Activated CD8-positive, alpha-beta T cell treated with anti-CD3 and anti-CD28 coated beads for 36 hours (primary cell): ENCODE measurements at regions of chr13 and their contacts with region 1.

Region 1: GRCh38 chr13:102913914-102914313 is 68.1 kb downstream of the ERCC5 start:
- DNase-seq: no peak
- ATAC-seq: no peak
- H3K4me3 Mint-ChIP-seq: no peak overlapping the region
- H3K27ac Mint-ChIP-seq: no peak overlapping the region
- H3K4me1 Mint-ChIP-seq: no peaks in the 10 kb centered on the region
- H3K27me3 Mint-ChIP-seq: peaks cover 18% of the 10 kb centered on the region
- CTCF ChIP-seq: no peak

Region 2: GRCh38 chr13:103140001-103140671 is 226.2 kb after region 1 on chr13:
- CTCF ChIA-PET with region 1: interaction called, 4 read pairs
- POLR2A ChIA-PET with region 1: no interaction called
- intact Hi-C with region 1: loop called (anchors 10 kb)
- DNase-seq: peak; percentile 3
- ATAC-seq: no peak
- H3K4me3 Mint-ChIP-seq: no peak overlapping the region
- H3K27ac Mint-ChIP-seq: no peak overlapping the region
- H3K4me1 Mint-ChIP-seq: no peaks in the 10 kb centered on the region
- H3K27me3 Mint-ChIP-seq: no peaks in the 10 kb centered on the region
- CTCF ChIP-seq: no peak